Aorta (tissue), 5 donors: ENCODE measurements at regions of chr14 and their contacts with region 1.

Region 1: DNA sequence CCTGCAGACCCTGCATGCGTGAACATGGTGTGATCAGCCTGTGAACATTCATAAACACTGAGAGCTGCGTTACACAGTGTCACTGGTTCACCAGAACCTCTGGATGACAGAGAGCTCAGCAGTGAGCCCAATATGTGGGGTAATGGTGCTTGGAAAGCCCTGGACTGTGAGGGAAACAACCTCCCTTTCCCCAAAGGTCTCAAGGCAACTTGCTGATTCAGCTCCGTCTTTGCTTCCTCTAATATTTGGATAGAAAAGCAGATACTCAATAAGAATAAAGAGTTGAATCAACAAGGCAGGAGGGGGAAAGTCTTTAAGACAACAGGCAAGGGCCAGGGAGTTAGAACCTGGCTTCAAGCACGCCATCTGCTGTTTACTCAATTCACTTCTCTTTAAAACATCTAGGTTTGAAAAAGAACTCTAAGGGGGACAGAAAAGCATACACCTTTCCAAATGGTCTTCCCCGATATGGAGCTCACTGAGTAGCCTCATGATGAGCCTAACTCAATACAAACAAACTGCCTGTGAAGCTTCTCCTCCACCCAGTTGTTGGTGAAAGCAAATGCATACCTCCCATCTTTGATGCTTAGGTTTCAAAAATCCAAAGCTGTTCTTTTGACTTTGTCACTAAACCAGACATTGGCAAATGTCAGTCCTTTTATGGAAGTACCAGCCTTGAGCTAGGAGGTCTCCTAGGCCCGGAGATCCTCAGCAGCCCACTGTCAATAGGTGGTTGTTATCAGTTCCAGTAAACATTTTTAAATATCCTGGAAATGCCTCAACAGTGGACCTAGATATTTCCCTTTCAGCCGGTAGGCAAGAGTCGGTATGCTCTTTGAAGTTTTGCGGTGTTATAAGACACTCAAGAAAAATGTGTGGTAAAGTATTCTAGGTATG is 76.1 kb downstream of the SAMD4A start:
- DNase-seq: no peak
- ATAC-seq: peak; percentile 25
- H3K4me3 ChIP-seq: no peak overlapping the region
- H3K27ac ChIP-seq: peak overlapping the region; percentile 7 to 45
- H3K4me1 ChIP-seq: peaks cover 6% of the 10 kb centered on the region in 2 donors
- H3K27me3 ChIP-seq: no peaks in the 10 kb centered on the region

Region 2: GRCh38 chr14:54572316-54572715 is 70.7 kb before region 1 on chr14:
- intact Hi-C with region 1: loop called in 1 of 2 experiments (anchors 10 kb)
- DNase-seq: no peak
- ATAC-seq: no peak
- H3K4me3 ChIP-seq: no peak overlapping the region
- H3K27ac ChIP-seq: no peak overlapping the region
- H3K4me1 ChIP-seq: peaks cover 6 to 14% of the 10 kb centered on the region in 2 donors
- H3K27me3 ChIP-seq: no peaks in the 10 kb centered on the region

Region 3: DNA sequence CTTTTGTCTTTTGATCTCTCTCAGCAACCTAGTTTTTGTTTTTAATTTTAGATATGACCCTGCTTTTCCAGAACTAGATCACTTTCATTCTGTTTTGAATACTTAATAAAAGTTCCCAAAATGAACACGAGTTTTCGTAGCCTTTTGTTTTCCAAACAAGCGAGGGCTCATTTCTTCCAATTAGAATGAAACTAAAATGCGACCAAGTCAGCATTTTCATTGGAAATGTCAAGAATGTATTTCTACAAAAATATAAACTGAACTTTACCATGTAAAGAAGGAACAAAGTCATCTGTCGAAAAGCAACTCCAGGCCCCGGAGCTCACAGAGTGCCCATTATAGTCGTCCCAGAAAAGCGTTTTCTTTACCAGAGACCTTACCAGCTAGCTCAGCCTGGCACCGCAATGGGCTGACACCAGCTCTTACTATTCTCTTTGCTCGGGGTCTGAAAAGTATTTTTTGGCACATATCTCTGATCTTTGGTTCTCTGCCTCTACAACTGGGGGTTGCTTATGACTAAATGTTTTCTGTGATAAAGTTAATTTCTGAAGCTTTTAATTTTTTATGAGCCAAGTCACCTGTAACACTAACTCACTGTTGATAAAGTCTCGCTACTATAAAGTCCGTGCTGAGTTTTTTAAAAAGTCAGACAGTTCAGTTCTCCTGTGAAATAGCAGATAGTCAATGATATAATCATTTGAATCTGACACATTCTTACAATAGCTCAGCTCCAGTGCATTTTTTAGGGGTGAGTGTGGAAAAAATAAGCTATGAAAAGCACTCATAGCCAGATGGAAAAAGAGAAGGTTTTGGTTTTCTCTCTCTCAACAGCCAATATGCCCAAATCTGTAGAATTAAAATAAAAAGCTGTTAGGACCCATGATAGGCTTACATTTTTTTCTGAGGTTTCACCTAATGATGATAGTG is 32.7 kb before region 1 on chr14:
- intact Hi-C with region 1: loop called in 1 of 2 experiments (anchors 5 kb)
- DNase-seq: no peak
- ATAC-seq: no peak
- H3K4me3 ChIP-seq: peak overlapping the region; percentile 9 to 16
- H3K27ac ChIP-seq: peak overlapping the region in 1 of 2 donors; percentile 88
- H3K4me1 ChIP-seq: peaks cover 4 to 6% of the 10 kb centered on the region in 2 donors
- H3K27me3 ChIP-seq: no peaks in the 10 kb centered on the region

Region 4: DNA sequence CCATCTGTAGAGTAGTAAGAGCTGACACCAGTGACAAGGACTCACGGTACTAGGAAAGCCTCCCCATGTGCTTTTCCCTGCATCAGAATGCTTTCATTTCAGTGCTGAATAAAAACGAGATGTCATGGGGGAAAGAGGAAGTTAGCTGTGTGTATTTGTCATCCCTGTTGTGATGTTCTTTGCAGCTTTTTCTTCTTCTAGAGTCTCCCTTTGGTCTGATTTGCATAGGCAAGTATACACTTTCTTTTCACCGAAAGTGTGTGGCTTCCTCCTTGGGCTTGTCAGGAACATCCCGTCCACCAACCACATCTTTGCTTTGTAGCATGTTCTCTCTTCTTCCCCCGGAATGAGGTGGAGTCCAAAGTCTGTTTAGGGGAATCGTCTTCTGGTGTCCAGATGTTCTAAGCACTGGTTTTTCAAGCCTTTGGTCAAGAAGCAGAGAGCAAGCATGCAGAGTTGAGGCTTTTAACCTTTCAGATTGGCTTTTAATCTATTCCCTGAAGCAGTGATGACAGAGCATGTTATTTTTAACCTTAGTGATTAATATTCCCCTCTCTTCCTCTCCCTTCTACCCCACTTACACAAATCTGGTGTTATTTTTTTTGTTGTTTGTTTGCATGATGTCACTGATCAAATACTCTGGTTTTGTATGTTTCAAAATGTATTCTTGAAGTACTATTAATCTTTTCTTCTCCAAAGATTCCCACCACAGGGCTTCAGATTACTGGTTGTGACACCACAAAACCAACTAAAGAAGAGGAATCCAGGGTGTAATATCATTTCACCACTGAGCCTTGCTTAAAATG is 87.3 kb after region 1 on chr14:
- intact Hi-C with region 1: no loop called
- DNase-seq: no peak
- ATAC-seq: peak; percentile 42
- H3K4me3 ChIP-seq: no peak overlapping the region
- H3K27ac ChIP-seq: peak overlapping the region; percentile 23 to 33
- H3K4me1 ChIP-seq: peaks cover 6 to 15% of the 10 kb centered on the region in 2 donors
- H3K27me3 ChIP-seq: no peaks in the 10 kb centered on the region